Pancreas (tissue), 10 donors: ENCODE measurements at regions of chr6 and their contacts with region 1.

Region 1: DNA sequence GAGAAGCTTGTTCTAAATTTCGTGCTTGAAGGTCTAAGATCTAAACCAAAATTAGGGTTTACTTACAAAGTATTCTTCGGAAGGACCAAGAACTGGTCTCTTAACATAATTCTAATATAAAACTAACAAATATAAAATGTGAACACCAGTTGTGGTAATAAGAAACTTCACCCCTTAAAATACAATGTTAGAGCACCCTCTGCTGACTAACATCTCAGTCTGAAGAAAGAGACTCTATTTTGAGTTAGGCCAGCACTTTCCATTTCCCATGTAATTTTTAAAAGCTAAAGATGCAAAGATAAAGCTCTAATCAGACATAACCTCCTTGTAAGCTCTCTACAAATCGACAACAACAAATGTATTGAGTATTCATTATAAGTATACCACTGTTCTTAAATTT is 24.6 kb downstream of the ATG5 start:
- DNase-seq: no peak
- ATAC-seq: peak in 3 of 4 donors; percentile 72 to 80 (median 78)
- H3K4me3 ChIP-seq: no peak overlapping the region
- H3K27ac ChIP-seq: no peak overlapping the region
- H3K4me1 ChIP-seq: peaks cover 8 to 16% (median 12%) of the 10 kb centered on the region in 3 donors
- H3K27me3 ChIP-seq: no peaks in the 10 kb centered on the region
- CTCF ChIP-seq: peak in 1 of 4 donors; percentile 9

Region 2: DNA sequence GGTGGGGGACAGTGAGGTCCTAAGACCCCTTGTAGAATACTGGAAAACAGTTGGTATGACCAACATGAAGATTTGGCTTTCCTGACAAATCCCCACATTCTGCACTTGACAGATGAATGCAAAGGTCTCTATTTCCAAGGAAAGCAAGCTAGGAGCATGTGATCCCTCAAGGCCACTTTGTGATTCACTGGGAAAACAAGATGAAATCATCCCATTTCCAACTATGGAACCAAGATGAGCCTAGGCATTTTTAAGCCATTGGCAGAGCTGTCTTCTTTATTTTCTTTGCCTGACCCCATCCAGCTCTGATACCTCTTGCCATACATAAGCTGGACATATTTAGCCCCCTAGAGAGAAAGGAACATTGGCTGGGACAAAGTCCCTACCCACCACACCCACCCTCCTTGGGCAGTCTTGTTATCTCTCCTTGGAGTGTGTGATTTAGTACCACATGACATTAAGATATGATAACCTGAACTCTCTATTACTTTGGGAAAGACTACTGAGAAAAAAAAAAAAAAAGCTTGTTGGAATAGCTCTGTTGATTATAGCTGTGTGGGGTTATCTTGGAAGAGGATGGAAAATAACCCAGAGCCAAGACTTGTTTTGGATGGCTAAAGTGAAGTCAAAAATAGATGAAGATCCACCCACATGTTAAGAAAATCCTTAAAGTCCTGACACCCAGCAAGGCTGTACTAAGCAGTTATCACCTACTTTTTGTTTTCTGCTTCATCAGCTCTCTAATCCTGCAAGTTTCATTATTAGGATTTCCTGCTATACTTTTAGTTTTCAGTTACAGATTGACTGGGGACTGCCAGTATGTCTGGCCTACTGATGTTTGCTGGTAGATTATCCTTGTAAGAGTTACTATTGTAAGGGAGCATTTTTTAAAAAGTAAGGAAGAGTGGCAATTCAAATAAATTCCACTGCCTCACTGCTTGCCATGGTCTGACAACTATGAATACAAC is 808.0 kb before region 1 on chr6:
- intact Hi-C with region 1: loop called in 1 of 3 experiments (anchors 10 kb)
- DNase-seq: no peak
- ATAC-seq: no peak
- H3K4me3 ChIP-seq: no peak overlapping the region
- H3K27ac ChIP-seq: no peak overlapping the region
- H3K4me1 ChIP-seq: no peaks in the 10 kb centered on the region
- H3K27me3 ChIP-seq: no peaks in the 10 kb centered on the region
- CTCF ChIP-seq: no peak

Region 3: GRCh38 chr6:106163446-106163965 is 137.4 kb before region 1 on chr6:
- intact Hi-C with region 1: no loop called
- DNase-seq: peak in 1 of 6 donors; percentile 30
- ATAC-seq: peak in 3 of 4 donors; percentile 22 to 72 (median 71)
- H3K4me3 ChIP-seq: no peak overlapping the region
- H3K27ac ChIP-seq: peak overlapping the region in 2 of 4 donors; percentile 59 to 73
- H3K4me1 ChIP-seq: no peaks in the 10 kb centered on the region
- H3K27me3 ChIP-seq: no peaks in the 10 kb centered on the region
- CTCF ChIP-seq: no peak